ENCODE measurements at regions of chr14 and their contacts with region 1.

Region 1: DNA sequence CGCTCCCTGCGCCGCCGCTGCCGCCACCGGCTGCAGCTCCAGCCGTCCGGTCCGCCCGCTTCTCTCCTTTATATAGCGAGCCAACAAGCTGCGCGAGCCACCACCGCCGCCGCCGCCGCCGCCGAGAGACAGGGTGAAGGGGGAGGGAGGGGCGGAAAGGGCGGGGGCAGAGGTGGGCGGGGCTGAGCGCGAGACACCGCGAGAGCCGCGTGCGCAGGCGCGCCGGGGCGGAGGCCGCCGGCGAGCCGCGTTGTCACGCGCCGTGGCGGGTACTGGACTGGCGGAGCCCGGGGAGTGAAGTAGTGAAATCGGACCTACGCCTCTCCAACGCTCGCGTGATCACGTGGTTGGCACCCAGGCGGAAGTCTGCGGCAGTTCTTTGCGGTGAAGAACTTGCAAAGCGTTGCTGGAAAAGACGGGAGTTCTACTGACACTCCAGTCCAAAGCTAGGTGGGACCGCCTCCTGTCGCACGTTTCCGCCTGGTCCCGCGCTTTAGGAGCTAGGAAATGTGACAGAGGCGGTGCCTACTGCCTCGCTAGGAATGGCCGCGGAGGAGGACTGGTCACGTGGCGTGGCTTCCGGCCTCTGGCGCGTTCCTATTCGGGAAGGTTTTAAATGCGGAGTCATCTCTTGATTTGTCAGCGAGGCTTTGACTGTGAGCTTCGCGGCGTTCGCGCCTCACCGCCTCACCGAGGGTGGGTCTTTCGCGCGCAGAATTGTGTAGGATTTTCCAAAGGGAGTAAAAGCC is at the start of gene GTF2A1:
- DNase-seq: peak; percentile 95
- ATAC-seq: peak; percentile 75
- H3K4me3 ChIP-seq: peak within 1 kb of the TSS; percentile 97
- H3K27ac ChIP-seq: peak within 1 kb of the TSS; percentile 97
- H3K4me1 ChIP-seq: peaks cover 23% of the 10 kb centered on the region
- H3K27me3 ChIP-seq: no peaks in the 10 kb centered on the region
- CTCF ChIP-seq: no peak
- total RNA-seq, gene GTF2A1: 20.7 and 24.4 TPM in 2 replicates

Region 2: GRCh38 chr14:81178063-81178462 is 42.9 kb before region 1 on chr14:
- CTCF ChIA-PET with region 1: no interaction called
- POLR2A ChIA-PET with region 1: no interaction called
- intact Hi-C with region 1: loop called (anchors 2 kb)
- DNase-seq: peak; percentile 56
- ATAC-seq: peak; percentile 99
- H3K4me3 ChIP-seq: no peak overlapping the region
- H3K27ac ChIP-seq: no peak overlapping the region
- H3K4me1 ChIP-seq: peaks cover 12% of the 10 kb centered on the region; the same call in 1 of the 2 replicates
- H3K27me3 ChIP-seq: no peaks in the 10 kb centered on the region
- CTCF ChIP-seq: no peak

Region 3: DNA sequence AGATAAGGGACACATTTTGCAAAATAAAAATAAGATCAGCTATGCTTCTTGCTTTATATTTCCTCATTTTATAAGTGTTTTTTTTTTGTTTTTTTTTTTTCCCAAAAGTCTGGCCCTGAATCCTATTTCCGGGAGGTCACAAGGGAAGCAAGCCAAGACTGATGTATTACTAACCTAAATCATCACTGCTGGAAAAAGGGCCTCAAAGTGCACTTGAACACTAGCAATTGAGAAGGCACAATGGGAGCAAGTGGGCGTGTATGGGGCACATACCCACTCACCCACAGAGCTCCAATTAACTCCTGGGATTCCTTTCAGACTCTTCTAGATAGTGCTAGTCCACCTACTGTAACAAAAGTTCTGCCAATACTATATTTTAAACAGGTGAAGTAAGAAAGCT is 120.4 kb after region 1 on chr14:
- CTCF ChIA-PET with region 1: no interaction called
- POLR2A ChIA-PET with region 1: interaction called, 15 read pairs
- intact Hi-C with region 1: no loop called
- DNase-seq: no peak
- ATAC-seq: no peak
- H3K4me3 ChIP-seq: no peak overlapping the region
- H3K27ac ChIP-seq: no peak overlapping the region
- H3K4me1 ChIP-seq: peaks cover 10% of the 10 kb centered on the region
- H3K27me3 ChIP-seq: no peaks in the 10 kb centered on the region
- CTCF ChIP-seq: no peak

Region 4: GRCh38 chr14:81384900-81385299 is 163.9 kb after region 1 on chr14:
- CTCF ChIA-PET with region 1: no interaction called
- POLR2A ChIA-PET with region 1: no interaction called
- intact Hi-C with region 1: loop called (anchors 5 kb)
- DNase-seq: peak; percentile 62
- ATAC-seq: peak; percentile 9
- H3K4me3 ChIP-seq: no peak overlapping the region
- H3K27ac ChIP-seq: no peak overlapping the region
- H3K4me1 ChIP-seq: peaks cover 37% of the 10 kb centered on the region
- H3K27me3 ChIP-seq: no peaks in the 10 kb centered on the region
- CTCF ChIP-seq: no peak

Measured in PC-3 (cell line).